Activated CD4-positive, alpha-beta T cell treated with anti-CD3 and anti-CD28 coated beads for 36 hours (primary cell): ENCODE measurements at regions of chr6 and their contacts with region 1.

Region 1: GRCh38 chr6:26270903-26271667 is 93.9 kb upstream of the BTN3A2 start:
- DNase-seq: peak; percentile 85
- ATAC-seq: peak; percentile 43
- H3K4me3 Mint-ChIP-seq: no peak overlapping the region
- H3K27ac Mint-ChIP-seq: no peak overlapping the region
- H3K4me1 Mint-ChIP-seq: peaks cover 23% of the 10 kb centered on the region
- H3K27me3 Mint-ChIP-seq: no peaks in the 10 kb centered on the region

Region 2: GRCh38 chr6:25882051-25882496 is 389.0 kb before region 1 on chr6:
- CTCF ChIA-PET with region 1: no interaction called
- POLR2A ChIA-PET with region 1: no interaction called
- intact Hi-C with region 1: no loop called
- DNase-seq: peak; percentile 68
- ATAC-seq: peak; percentile 92
- H3K4me3 Mint-ChIP-seq: peak overlapping the region; percentile 76
- H3K27ac Mint-ChIP-seq: peak overlapping the region; percentile 38
- H3K4me1 Mint-ChIP-seq: peaks cover 3% of the 10 kb centered on the region
- H3K27me3 Mint-ChIP-seq: peaks cover 4% of the 10 kb centered on the region

Region 3: DNA sequence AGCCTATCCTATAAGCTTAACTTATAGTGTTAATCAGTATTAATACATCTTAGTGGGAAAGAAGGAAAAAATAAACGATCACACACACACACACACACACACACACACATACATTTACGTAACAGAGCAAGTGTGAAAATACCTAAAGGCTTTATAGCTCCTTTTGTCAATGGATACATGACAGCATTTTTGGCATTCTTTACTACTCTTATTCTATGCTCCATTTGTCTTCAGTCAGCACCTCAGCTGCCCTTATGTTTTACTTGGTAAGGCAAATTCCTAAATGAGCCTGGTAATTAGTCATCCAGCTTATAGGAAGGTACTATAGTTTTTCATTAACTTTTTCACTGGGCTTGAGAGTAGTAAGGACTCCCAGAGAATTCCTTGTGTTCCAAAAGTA is 372.0 kb before region 1 on chr6:
- CTCF ChIA-PET with region 1: no interaction called
- POLR2A ChIA-PET with region 1: no interaction called
- intact Hi-C with region 1: no loop called
- DNase-seq: no peak
- ATAC-seq: no peak
- H3K4me3 Mint-ChIP-seq: no peak overlapping the region
- H3K27ac Mint-ChIP-seq: no peak overlapping the region
- H3K4me1 Mint-ChIP-seq: peaks cover 10% of the 10 kb centered on the region
- H3K27me3 Mint-ChIP-seq: peaks cover 5% of the 10 kb centered on the region

Region 4: DNA sequence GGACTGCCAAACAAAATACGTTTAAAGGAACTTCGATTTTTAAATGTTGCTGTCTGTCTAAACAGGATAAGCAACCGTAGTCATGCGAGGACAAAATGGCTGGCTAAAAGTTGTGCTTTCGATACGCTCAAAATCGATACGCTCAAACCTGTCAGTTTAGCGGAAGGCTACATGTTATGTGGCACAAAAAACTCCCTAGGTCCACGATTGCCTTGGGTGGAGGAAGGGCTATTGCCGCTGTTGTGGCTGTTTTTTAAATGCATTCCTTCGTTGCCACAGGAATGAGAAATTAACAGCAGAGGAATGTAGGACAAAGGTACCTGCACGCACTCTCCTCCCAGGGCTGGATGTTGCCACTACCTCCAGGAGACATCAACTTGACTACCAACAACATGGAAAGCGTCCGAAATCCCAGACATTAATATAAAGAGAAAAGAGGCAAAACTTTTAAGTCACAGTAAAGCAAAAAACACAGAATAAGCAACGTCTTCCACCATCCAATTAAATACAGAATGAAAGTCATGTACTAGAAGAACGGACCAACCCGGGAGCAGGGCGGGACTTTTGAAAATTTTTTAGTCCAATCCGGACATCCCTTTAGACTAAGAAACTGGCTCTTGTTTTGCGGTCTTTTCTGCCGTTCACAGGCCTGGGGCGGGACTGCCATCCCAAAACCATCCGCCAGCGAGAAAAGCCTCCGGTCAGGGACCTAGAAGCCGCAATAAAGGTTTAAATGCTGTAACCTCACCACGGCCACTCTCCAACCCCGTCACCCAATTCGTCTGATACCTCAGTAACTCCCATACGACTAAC is 216.0 kb before region 1 on chr6:
- CTCF ChIA-PET with region 1: no interaction called
- POLR2A ChIA-PET with region 1: interaction called, 4 read pairs
- intact Hi-C with region 1: loop called in 1 of 2 experiments (anchors 5 kb)
- DNase-seq: peak; percentile 91
- ATAC-seq: peak; percentile 70
- H3K4me3 Mint-ChIP-seq: peak overlapping the region; percentile 96
- H3K27ac Mint-ChIP-seq: peak overlapping the region; percentile 99
- H3K4me1 Mint-ChIP-seq: peaks cover 13% of the 10 kb centered on the region
- H3K27me3 Mint-ChIP-seq: no peaks in the 10 kb centered on the region

Region 5: DNA sequence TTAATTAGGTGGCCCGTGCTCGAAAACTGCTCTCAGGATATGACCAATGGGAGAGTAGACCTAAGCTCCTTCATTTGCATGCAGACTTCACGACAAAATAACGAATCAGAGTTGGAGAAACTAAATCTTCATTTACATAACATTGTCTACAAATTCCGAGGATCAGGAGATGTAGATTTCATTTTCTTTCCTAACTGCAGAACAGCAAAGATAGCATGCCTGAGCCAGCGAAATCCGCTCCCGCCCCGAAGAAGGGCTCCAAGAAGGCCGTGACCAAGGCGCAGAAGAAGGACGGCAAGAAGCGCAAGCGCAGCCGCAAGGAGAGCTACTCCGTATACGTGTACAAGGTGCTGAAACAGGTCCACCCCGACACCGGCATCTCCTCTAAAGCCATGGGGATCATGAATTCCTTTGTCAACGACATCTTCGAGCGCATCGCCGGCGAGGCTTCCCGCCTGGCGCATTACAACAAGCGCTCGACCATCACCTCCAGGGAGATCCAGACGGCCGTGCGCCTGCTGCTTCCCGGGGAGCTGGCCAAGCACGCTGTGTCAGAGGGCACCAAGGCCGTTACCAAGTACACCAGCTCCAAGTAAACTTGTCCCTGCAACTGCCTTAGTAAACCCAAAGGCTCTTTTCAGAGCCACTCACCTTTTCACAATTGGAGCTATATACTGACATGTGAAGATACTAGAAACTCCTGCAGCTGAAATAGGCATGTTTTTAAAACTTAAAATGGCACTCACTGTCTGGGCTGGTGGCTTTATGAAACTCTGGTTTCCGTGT is 87.3 kb before region 1 on chr6:
- CTCF ChIA-PET with region 1: no interaction called
- POLR2A ChIA-PET with region 1: interaction called, 12 read pairs
- intact Hi-C with region 1: no loop called
- DNase-seq: peak; percentile 82
- ATAC-seq: peak; percentile 80
- H3K4me3 Mint-ChIP-seq: peak overlapping the region; percentile 89
- H3K27ac Mint-ChIP-seq: peak overlapping the region; percentile 92
- H3K4me1 Mint-ChIP-seq: peaks cover 45% of the 10 kb centered on the region
- H3K27me3 Mint-ChIP-seq: no peaks in the 10 kb centered on the region

Region 6: DNA sequence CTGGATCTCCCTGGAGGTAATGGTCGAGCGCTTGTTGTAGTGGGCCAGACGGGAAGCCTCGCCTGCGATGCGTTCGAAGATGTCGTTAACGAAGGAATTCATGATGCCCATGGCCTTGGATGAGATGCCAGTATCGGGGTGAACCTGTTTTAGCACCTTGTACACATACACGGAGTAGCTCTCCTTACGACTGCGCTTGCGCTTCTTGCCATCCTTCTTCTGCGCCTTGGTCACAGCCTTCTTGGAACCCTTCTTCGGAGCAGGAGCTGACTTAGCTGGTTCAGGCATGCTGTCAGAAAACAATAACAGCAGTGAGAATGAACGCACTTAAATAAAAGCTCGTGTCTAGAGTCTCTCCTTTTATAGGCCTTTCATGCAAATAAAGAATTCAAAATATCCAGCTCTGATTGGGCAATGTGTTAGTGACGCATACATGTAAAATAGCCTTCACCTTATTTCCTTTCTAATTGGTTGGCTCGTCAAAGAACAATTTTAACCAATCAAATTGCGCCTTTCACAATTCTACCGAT is 54.7 kb before region 1 on chr6:
- CTCF ChIA-PET with region 1: interaction called, 3 read pairs
- POLR2A ChIA-PET with region 1: interaction called, 49 read pairs
- intact Hi-C with region 1: loop called (anchors 1 to 5 kb)
- DNase-seq: peak; percentile 88
- ATAC-seq: peak; percentile 76
- H3K4me3 Mint-ChIP-seq: no peak overlapping the region
- H3K27ac Mint-ChIP-seq: no peak overlapping the region
- H3K4me1 Mint-ChIP-seq: peaks cover 2% of the 10 kb centered on the region
- H3K27me3 Mint-ChIP-seq: no peaks in the 10 kb centered on the region

Region 7: DNA sequence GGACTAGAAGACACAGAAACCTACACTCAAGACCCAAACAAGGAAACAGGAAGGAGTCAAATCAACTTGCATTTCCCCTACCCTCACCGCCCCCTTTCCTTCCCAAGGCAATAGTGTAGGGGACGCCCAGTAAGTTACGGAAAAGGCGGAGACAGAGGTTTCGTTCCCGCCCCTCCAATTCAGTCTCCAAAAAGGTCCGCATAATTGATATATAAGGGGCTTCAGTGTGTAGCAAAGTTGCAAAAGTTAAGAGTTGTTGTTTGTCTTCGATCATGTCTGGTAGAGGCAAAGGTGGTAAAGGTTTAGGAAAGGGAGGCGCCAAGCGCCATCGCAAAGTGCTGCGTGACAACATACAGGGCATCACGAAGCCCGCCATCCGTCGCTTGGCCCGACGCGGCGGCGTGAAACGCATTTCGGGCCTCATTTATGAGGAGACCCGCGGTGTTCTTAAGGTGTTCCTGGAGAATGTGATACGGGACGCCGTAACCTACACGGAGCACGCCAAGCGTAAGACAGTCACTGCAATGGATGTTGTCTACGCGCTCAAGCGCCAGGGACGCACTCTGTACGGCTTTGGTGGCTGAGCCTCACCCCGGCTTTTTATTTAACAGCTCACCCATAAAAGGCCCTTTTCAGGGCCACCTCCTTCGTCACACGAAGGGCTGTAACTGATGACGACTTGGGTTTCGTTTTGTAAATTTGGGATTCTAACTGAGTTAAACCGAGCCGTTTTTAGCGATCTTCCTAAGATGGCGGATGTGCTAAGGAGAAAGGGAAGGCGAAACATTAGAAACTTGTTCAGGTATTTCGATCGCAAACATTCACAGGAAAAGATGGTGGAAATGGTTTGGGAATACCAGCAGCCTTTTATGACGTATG is 30.7 kb before region 1 on chr6:
- CTCF ChIA-PET with region 1: interaction called, 5 read pairs
- POLR2A ChIA-PET with region 1: interaction called, 95 read pairs
- intact Hi-C with region 1: loop called (anchors 1 to 2 kb)
- DNase-seq: peak; percentile 85
- ATAC-seq: peak; percentile 83
- H3K4me3 Mint-ChIP-seq: peak overlapping the region; percentile 83
- H3K27ac Mint-ChIP-seq: peak overlapping the region; percentile 98
- H3K4me1 Mint-ChIP-seq: peaks cover 26% of the 10 kb centered on the region
- H3K27me3 Mint-ChIP-seq: no peaks in the 10 kb centered on the region

Region 8: DNA sequence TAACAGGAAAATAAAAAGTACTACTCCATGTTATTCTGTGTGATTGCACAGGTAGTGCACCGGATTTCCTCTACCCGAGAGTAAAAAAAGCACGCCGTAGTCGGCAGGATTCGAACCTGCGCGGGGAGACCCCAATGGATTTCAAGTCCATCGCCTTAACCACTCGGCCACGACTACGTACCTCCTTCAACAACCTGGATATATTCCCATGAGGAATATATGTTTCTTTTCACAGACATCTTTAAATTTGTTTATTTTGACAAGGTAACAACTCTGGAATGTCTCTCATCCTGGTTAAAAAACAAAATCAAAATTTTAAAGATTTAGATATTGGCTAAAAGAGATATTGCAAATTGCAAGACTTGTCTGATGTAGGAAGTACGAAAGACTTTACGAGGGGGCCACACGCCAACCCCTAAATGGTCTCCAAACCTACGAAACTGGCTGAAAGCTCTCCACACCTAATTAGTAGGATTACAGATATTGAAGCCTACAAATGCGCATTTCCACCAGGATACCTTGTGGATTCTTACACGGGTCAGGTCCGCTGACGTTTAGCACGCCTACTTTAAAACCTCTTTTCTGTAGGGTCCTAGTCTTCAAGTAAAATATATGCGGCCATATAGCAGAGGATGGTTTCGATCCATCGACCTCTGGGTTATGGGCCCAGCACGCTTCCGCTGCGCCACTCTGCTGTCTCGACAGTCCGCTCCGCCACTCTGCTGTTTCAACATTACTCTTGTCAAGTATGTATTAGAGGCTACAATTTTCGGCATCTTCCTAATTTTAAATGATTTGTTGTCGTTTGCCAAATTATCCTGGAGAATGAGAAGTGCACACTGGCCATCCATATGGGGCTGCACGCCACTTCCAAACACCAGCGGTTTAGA is 41.7 kb after region 1 on chr6:
- CTCF ChIA-PET with region 1: interaction called, 4 read pairs
- POLR2A ChIA-PET with region 1: interaction called, 11 read pairs
- intact Hi-C with region 1: loop called (anchors 1 to 5 kb)
- DNase-seq: peak; percentile 89
- ATAC-seq: peak; percentile 69
- H3K4me3 Mint-ChIP-seq: peak overlapping the region; percentile 88
- H3K27ac Mint-ChIP-seq: peak overlapping the region; percentile 90
- H3K4me1 Mint-ChIP-seq: peaks cover 37% of the 10 kb centered on the region
- H3K27me3 Mint-ChIP-seq: peaks cover 3% of the 10 kb centered on the region